ENCODE measurements at regions of chrX and their contacts with region 1.

Region 1: DNA sequence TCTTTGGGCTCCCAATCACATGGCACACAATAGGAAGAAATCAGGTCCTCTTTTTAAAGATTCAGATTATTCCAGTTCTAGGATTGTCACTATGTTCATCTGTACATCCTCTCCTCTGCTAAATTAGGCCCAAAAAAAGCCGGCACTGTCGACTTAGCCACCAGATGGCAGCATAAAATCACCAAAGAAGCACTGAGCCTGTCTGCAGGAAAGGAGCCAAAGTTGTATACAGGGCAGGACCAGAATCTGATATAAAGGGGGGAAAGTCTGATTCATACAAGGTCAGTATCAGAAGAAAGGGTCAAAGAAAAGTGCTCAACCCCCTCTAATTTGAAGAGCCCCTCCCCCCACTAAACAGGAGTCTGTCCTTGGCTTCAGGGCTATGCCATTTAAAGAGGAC is 292.5 kb downstream of the CHIC1 start:
- DNase-seq: peak; percentile 32 to 80 (median 60)
- ATAC-seq: peak; percentile 49
- H3K4me3 ChIP-seq: no peak overlapping the region
- H3K4me3 Mint-ChIP-seq: no peak overlapping the region
- H3K27ac ChIP-seq: no peak overlapping the region
- H3K27ac Mint-ChIP-seq: no peak overlapping the region
- H3K4me1 ChIP-seq: no peaks in the 10 kb centered on the region
- H3K4me1 Mint-ChIP-seq: no peaks in the 10 kb centered on the region
- H3K27me3 ChIP-seq: no peaks in the 10 kb centered on the region
- H3K27me3 Mint-ChIP-seq: no peaks in the 10 kb centered on the region
- CTCF ChIP-seq: peak; percentile 56

Region 2: DNA sequence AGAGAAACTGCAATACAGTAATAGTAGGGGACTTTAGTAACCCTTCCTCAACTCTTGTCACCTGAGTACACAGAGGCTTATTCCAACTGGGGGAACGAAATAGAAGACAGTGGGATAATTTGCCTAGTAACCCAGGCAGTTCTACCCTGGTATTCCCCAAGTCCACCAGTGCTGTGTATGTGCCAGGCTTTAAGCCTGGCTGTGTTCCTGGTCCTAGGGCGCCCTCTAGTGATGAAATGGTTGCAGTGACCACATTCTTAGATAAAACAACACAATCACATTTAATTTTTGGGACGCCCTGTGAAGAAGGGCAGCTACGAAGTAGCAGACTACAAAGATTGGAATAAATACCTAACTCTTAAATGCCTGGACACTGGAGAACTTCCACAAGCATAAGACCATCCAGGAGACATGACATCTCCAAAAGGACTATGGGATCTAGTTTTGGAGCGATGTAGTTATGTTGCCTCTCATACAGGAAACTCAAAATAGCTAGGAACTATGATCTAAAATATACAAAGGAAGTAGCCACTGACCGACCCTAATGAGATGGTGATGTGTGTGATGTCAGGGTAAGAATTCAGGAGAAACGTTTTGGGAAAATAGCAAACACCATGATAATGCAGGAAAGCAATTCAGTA is 160.0 kb after region 1 on chrX:
- CTCF ChIA-PET with region 1: interaction called, 7 read pairs
- POLR2A ChIA-PET with region 1: no interaction called
- intact Hi-C with region 1: loop called (anchors 1 kb)
- DNase-seq: peak; percentile 33 to 80 (median 51)
- ATAC-seq: peak; percentile 55
- H3K4me3 ChIP-seq: no peak overlapping the region
- H3K4me3 Mint-ChIP-seq: no peak overlapping the region
- H3K27ac ChIP-seq: no peak overlapping the region
- H3K27ac Mint-ChIP-seq: no peak overlapping the region
- H3K4me1 ChIP-seq: no peaks in the 10 kb centered on the region
- H3K4me1 Mint-ChIP-seq: peaks cover 5% of the 10 kb centered on the region
- H3K27me3 ChIP-seq: no peaks in the 10 kb centered on the region
- H3K27me3 Mint-ChIP-seq: no peaks in the 10 kb centered on the region
- CTCF ChIP-seq: peak; percentile 78

Region 3: DNA sequence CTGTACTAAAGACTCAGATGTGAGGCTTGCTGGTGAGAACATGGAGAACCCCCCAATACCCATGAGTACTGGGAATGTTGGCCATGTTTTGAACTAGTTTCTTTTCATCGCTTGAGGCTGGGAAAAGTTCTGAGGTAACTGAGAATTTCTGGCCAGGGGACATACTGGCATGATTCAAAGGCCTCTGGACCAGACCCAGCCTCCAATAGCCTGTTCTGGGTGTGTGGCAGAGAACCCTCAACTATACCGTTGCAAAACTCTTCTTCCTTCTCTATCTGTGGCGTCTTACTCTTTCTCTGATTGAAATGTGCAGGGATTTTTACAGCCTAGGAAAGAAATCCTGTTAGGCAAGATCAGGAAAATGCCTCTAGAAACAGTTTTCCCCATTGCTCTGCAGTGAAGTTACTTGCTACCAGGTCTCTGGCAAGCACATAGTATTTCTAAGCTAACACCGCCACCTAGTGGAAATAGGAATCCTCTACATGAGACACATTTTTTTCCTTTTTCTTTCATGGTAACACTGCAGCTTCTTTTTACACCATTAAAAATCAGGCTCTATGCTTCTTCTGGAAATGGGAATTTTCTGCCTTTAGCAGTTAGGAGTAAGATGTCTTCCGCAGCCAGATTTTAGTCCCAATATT is 277.7 kb after region 1 on chrX:
- CTCF ChIA-PET with region 1: no interaction called
- POLR2A ChIA-PET with region 1: no interaction called
- intact Hi-C with region 1: loop called in 1 of 2 experiments (anchors 1 kb)
- DNase-seq: peak in 4 of 14 experiments; percentile 24 to 65 (median 56)
- ATAC-seq: no peak
- H3K4me3 ChIP-seq: no peak overlapping the region
- H3K4me3 Mint-ChIP-seq: no peak overlapping the region
- H3K27ac ChIP-seq: no peak overlapping the region
- H3K27ac Mint-ChIP-seq: no peak overlapping the region
- H3K4me1 ChIP-seq: no peaks in the 10 kb centered on the region
- H3K4me1 Mint-ChIP-seq: no peaks in the 10 kb centered on the region
- H3K27me3 ChIP-seq: no peaks in the 10 kb centered on the region
- H3K27me3 Mint-ChIP-seq: no peaks in the 10 kb centered on the region
- CTCF ChIP-seq: peak; percentile 68

Region 4: GRCh38 chrX:74343343-74344279 is 488.1 kb after region 1 on chrX:
- CTCF ChIA-PET with region 1: no interaction called
- POLR2A ChIA-PET with region 1: no interaction called
- intact Hi-C with region 1: loop called (anchors 1 kb)
- DNase-seq: peak in 12 of 14 experiments; percentile 6 to 75 (median 20)
- ATAC-seq: no peak
- H3K4me3 ChIP-seq: no peak overlapping the region
- H3K4me3 Mint-ChIP-seq: no peak overlapping the region
- H3K27ac ChIP-seq: no peak overlapping the region
- H3K27ac Mint-ChIP-seq: no peak overlapping the region
- H3K4me1 ChIP-seq: peaks cover 2% of the 10 kb centered on the region
- H3K4me1 Mint-ChIP-seq: peaks cover 4% of the 10 kb centered on the region
- H3K27me3 ChIP-seq: no peaks in the 10 kb centered on the region
- H3K27me3 Mint-ChIP-seq: peaks cover 4% of the 10 kb centered on the region
- CTCF ChIP-seq: peak; percentile 52

Region 5: DNA sequence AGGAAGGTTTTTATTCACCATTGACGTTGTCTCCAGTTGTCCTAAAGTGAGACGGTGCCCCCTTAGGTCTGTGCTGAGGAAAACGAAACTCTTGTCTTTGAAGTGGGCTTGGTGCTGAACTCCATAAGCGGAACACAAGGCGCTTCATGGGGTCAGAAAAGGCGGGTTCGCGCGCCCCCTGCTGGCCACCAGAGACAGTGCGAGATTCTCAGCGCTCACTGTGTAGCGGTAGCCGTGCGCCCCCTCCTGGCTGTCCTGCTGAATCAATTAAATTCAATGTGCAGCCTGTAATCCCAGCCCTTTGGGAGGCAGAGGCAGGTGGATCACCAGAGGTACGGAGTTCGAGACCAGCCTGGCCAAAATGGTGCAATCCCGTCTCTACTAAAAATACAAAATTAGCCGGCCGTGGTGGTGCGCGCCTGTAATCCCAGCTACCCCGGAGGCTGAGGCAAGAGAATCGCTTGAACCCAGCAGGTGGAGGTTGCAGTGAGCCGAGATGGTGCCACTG is 694.8 kb after region 1 on chrX:
- CTCF ChIA-PET with region 1: no interaction called
- POLR2A ChIA-PET with region 1: no interaction called
- intact Hi-C with region 1: loop called (anchors 5 kb)
- DNase-seq: peak; percentile 70 to 94 (median 81)
- ATAC-seq: peak; percentile 95
- H3K4me3 ChIP-seq: peak overlapping the region; percentile 13
- H3K4me3 Mint-ChIP-seq: peak overlapping the region; percentile 63
- H3K27ac ChIP-seq: no peak overlapping the region
- H3K27ac Mint-ChIP-seq: no peak overlapping the region
- H3K4me1 ChIP-seq: peaks cover 7% of the 10 kb centered on the region
- H3K4me1 Mint-ChIP-seq: peaks cover 5% of the 10 kb centered on the region
- H3K27me3 ChIP-seq: no peaks in the 10 kb centered on the region
- H3K27me3 Mint-ChIP-seq: no peaks in the 10 kb centered on the region
- CTCF ChIP-seq: peak; percentile 92

Region 6: DNA sequence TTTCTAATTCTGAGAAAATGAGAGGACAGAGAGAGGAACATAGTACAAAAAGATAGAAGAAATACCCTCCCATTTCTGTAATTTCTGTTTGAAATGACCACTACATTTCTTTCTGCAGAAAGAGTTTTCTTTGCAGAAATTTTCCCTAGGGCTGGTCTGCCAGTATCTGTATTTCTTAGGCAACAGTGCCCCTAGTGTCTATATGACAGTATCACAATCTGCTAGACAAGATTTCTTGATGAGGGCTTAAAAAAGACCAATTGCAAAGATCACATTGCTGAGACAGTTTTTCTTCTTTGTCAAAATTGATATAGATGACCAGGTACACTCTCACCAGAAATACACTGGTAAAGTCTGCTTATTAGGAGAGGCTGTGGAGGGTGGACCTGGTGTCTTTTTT is 1748.3 kb after region 1 on chrX:
- CTCF ChIA-PET with region 1: no interaction called
- POLR2A ChIA-PET with region 1: no interaction called
- intact Hi-C with region 1: loop called in 1 of 2 experiments (anchors 10 kb)
- DNase-seq: peak in 3 of 14 experiments; percentile 21 to 42 (median 30)
- ATAC-seq: no peak
- H3K4me3 ChIP-seq: no peak overlapping the region
- H3K4me3 Mint-ChIP-seq: no peak overlapping the region
- H3K27ac ChIP-seq: no peak overlapping the region
- H3K27ac Mint-ChIP-seq: no peak overlapping the region
- H3K4me1 ChIP-seq: no peaks in the 10 kb centered on the region
- H3K4me1 Mint-ChIP-seq: no peaks in the 10 kb centered on the region
- H3K27me3 ChIP-seq: no peaks in the 10 kb centered on the region
- H3K27me3 Mint-ChIP-seq: no peaks in the 10 kb centered on the region
- CTCF ChIP-seq: peak; percentile 60